ENCODE measurements at regions of chr2 and their contacts with region 1.

Region 1: GRCh38 chr2:208101716-208102631 is 22.4 kb downstream of the CRYGD start:
- DNase-seq: peak; percentile 35
- H3K4me3 ChIP-seq: no peak overlapping the region
- H3K27ac ChIP-seq: no peak overlapping the region
- H3K4me1 ChIP-seq: no peaks in the 10 kb centered on the region
- H3K27me3 ChIP-seq: no peaks in the 10 kb centered on the region
- CTCF ChIP-seq: peak; percentile 60 to 64

Region 2: DNA sequence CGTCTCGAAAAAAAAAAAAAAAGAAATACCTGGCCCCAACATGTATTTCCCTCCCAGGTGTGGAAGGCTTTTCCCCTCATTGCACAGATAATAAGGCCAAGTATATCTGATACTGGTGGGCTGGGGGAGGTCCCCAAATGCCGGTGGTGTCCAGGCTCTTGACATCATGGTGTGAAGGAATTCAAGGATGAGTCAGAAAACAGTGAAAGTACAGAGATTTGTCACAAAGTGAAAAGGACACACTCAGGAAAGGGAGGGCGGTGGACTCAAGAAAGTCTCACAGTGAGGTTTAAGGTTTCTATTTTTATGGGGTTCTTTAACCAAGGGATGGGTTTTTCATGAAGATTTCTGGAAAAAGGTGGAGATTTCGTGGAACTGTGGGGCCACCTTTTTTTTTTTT is 294.5 kb before region 1 on chr2:
- CTCF ChIA-PET with region 1: no interaction called
- dilution Hi-C with region 1: no loop called
- in situ Hi-C with region 1: no loop called
- intact Hi-C with region 1: no loop called
- DNase-seq: no peak
- H3K4me3 ChIP-seq: no peak overlapping the region
- H3K27ac ChIP-seq: no peak overlapping the region
- H3K4me1 ChIP-seq: peaks cover 30% of the 10 kb centered on the region
- H3K27me3 ChIP-seq: no peaks in the 10 kb centered on the region
- CTCF ChIP-seq: no peak

Region 3: DNA sequence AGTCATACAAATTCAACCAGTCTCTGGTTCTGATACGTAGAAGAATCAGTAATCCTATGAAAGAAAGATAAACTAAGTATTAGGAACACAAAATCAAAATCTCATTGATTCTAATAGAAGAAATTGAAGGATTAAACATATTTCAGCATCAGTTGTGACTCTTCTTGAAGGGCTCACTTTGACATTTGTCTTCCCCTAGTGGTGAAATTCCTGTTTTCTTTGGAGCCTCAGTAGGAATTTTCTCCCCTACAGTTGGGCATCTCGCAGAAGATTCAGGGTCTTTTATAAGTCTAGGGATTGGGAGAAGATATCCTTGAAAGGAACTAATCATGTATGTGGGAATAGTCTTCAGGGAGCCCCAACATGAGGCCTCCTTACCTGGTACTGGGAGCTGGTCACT is 46.8 kb after region 1 on chr2:
- CTCF ChIA-PET with region 1: no interaction called
- dilution Hi-C with region 1: no loop called
- in situ Hi-C with region 1: no loop called
- intact Hi-C with region 1: loop called (anchors 1 kb)
- DNase-seq: no peak
- H3K4me3 ChIP-seq: no peak overlapping the region
- H3K27ac ChIP-seq: no peak overlapping the region
- H3K4me1 ChIP-seq: no peaks in the 10 kb centered on the region
- H3K27me3 ChIP-seq: no peaks in the 10 kb centered on the region
- CTCF ChIP-seq: peak in 1 of 2 donors; percentile 39

Region 4: GRCh38 chr2:208175069-208175839 is 73.3 kb after region 1 on chr2:
- CTCF ChIA-PET with region 1: interaction called, 3 read pairs
- dilution Hi-C with region 1: no loop called
- in situ Hi-C with region 1: no loop called
- intact Hi-C with region 1: loop called (anchors 5 kb)
- DNase-seq: peak; percentile 72
- H3K4me3 ChIP-seq: no peak overlapping the region
- H3K27ac ChIP-seq: no peak overlapping the region
- H3K4me1 ChIP-seq: peaks cover 5% of the 10 kb centered on the region
- H3K27me3 ChIP-seq: no peaks in the 10 kb centered on the region
- CTCF ChIP-seq: peak; percentile 91 to 93

Region 5: DNA sequence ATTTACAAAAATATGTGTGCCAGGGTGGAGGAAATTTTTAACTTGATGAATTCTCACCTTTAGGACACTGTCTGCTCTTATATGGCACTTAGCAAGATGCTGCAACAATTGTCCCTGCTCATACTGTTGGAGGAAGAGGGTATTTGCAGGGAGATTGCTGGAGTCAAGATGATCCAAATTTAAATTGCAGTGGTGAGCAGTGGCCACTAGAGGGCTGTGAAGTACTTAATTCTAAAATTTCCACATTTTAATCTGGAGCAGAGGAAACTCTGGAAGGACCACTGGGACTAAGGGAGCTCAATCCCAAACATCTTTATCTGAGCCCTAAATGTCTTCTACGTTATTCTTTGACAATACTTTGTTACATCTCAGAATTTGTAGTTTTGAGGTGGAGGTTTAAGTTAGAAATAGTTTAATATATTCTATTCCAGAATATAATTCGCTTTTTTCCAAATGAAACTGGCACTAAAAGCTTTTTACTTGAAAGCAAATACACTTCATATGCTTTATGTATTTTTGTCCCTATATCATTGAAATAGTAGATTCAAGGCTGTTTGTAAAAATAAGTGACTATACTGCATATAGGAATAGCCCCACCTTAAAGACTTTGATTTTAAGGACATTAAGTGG is 271.6 kb after region 1 on chr2:
- CTCF ChIA-PET with region 1: no interaction called
- dilution Hi-C with region 1: no loop called
- in situ Hi-C with region 1: no loop called
- intact Hi-C with region 1: loop called (anchors 5 kb)
- DNase-seq: peak; percentile 24
- H3K4me3 ChIP-seq: no peak overlapping the region
- H3K27ac ChIP-seq: no peak overlapping the region
- H3K4me1 ChIP-seq: no peaks in the 10 kb centered on the region
- H3K27me3 ChIP-seq: no peaks in the 10 kb centered on the region
- CTCF ChIP-seq: peak; percentile 84 to 85

Region 6: DNA sequence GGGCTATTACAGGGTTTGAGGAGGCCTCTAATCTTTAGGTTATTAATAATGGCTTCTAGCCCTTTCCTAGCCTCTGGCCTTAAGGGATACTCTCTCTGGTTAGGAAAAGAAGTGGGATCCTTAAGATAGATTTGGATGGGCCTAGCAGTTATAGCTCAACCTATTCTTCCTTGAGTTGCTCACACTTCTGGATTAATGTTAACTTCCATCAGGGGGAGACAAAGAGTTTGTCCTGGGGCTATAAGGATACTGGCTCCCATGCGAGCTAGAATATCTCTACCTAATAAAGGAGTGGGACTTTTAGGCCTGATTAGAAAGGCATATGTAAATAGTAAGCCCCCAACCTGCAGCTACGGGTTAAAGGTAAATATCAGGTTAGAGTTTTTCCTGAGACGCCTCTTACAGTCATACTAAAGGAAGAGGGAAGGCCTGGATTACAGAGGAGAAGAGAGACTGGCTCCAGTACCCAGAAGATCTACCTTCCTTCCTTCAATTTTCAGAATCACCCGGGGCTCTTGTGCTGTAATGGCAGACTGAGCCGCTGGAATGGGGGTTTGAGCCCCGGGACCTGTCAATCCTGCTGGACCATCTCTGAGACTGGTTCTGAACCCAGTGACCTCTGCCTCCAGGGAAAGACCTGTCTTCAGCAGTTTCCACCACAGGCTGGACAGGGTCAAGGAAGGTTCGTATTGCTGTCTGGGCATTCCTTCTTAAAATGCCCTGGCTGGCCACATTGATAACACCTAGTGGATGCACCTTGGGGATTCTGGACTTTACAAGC is 290.5 kb after region 1 on chr2:
- CTCF ChIA-PET with region 1: no interaction called
- dilution Hi-C with region 1: no loop called
- in situ Hi-C with region 1: no loop called
- intact Hi-C with region 1: loop called (anchors 5 kb)
- DNase-seq: no peak
- H3K4me3 ChIP-seq: no peak overlapping the region
- H3K27ac ChIP-seq: no peak overlapping the region
- H3K4me1 ChIP-seq: no peaks in the 10 kb centered on the region
- H3K27me3 ChIP-seq: no peaks in the 10 kb centered on the region
- CTCF ChIP-seq: peak; percentile 17 to 20

Measured in mammary epithelial cell (primary cell).